ENCODE measurements at regions of chr13 and their contacts with region 1.

Region 1: GRCh38 chr13:27826379-27827353 is 34.4 kb downstream of the GSX1 start:
- DNase-seq: peak; percentile 70
- H3K4me3 Mint-ChIP-seq: no peak overlapping the region
- H3K27ac Mint-ChIP-seq: no peak overlapping the region
- H3K4me1 Mint-ChIP-seq: peaks cover 11% of the 10 kb centered on the region
- H3K27me3 Mint-ChIP-seq: peaks cover 65% of the 10 kb centered on the region

Region 2: DNA sequence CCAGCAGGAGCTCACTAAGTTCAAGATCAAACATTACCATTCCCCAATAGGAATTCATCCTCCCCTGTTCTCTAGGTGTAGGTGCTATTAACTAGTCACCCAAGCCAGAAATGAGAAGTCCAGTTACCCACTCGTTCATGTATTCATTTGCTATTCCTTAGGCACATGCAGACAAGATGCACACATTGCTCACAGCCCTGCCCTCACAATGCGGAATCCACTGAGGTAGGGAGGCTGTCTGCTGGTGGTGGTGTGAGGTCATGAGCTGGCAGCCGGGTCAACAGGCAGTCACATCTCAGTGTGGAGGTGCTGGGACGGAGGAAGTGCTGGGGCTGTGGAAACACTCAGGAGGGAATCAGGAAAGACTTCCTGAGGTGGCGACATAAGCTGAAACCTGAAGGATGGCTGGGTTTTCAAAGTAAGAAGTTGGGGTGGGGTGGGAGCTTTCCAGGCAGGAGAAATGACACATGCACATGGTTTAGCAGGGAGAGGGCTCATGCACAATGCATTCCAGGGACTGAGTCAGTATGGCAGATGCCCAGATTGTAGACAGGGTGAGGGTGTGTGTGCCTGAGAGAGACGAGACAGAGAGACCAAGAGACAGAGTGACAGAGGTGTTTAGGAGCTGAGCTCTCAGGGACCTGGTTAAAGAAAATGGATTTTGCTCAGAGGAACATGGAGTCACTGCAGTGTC is 772.6 kb before region 1 on chr13:
- CTCF ChIA-PET with region 1: no interaction called
- POLR2A ChIA-PET with region 1: no interaction called
- DNase-seq: no peak
- H3K4me3 Mint-ChIP-seq: no peak overlapping the region
- H3K27ac Mint-ChIP-seq: no peak overlapping the region
- H3K4me1 Mint-ChIP-seq: peaks cover 11% of the 10 kb centered on the region
- H3K27me3 Mint-ChIP-seq: no peaks in the 10 kb centered on the region

Region 3: DNA sequence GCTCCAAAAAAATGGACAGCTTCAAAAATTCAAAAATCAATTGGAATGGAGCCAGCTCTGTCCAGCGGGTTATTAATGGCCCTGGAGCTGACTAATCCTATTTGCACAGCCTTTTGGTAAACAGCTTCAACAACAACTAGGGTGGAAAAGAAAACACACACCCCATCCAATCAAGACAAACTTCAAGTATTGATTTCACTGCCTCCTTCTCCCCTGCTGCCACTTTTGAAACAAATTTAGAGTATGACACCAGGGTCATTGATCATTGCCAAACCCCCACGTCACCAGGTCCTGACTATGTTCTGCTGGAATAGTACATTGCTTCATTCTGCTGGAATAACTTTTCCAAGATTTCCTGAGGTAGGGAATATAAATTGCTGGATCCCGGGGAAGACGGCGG is 459.1 kb before region 1 on chr13:
- CTCF ChIA-PET with region 1: interaction called, 132 read pairs
- POLR2A ChIA-PET with region 1: no interaction called
- DNase-seq: no peak
- H3K4me3 Mint-ChIP-seq: no peak overlapping the region
- H3K27ac Mint-ChIP-seq: no peak overlapping the region
- H3K4me1 Mint-ChIP-seq: peaks cover 7% of the 10 kb centered on the region
- H3K27me3 Mint-ChIP-seq: peaks cover 35% of the 10 kb centered on the region

Region 4: GRCh38 chr13:27406178-27406939 is 420.3 kb before region 1 on chr13:
- CTCF ChIA-PET with region 1: interaction called, 19 read pairs
- POLR2A ChIA-PET with region 1: no interaction called
- DNase-seq: peak; percentile 38
- H3K4me3 Mint-ChIP-seq: no peak overlapping the region
- H3K27ac Mint-ChIP-seq: no peak overlapping the region
- H3K4me1 Mint-ChIP-seq: peaks cover 5% of the 10 kb centered on the region
- H3K27me3 Mint-ChIP-seq: peaks cover 29% of the 10 kb centered on the region

Region 5: GRCh38 chr13:27489456-27489855 is 337.2 kb before region 1 on chr13:
- CTCF ChIA-PET with region 1: no interaction called
- POLR2A ChIA-PET with region 1: no interaction called
- DNase-seq: no peak
- H3K4me3 Mint-ChIP-seq: no peak overlapping the region
- H3K27ac Mint-ChIP-seq: no peak overlapping the region
- H3K4me1 Mint-ChIP-seq: no peaks in the 10 kb centered on the region
- H3K27me3 Mint-ChIP-seq: no peaks in the 10 kb centered on the region

Region 6: DNA sequence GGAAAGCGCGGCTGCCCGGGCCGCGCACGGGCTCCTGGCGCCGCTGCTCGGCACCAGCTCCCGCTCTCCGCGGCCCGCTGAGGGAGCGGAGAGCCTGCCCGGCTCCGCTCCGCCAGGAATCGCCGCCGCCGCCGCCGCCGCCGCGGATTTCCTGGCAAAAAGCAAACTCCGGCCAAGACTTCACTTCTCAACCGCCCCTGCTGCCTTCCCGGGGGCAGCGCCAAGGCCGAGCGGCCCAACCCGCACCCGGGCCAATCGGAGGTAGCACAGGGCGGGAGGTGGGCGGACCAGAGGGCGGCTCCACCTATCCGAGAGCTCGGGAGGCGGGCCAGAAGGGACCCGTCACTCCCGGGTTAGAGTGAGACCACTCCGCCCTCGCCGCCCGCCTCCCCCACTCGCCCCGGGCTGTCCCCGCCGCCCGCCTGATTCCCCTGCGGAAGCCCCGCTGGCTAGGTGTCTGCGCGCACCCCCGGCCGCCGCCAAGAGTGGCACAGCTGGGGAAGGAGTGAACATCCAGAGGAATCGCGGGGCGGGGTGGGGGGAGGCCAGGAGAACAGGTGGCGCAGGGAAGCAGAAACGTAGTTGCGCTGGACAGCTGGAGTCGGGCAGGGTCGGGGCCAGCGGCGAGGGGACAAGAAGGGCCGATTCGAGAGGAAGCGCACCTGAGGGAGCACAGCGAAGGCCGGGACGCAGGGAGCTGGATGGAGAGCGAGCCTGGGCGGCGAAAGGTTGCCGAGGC is 206.1 kb before region 1 on chr13 and contains the start of gene LNX2:
- CTCF ChIA-PET with region 1: interaction called, 15 read pairs
- POLR2A ChIA-PET with region 1: interaction called, 3 read pairs
- DNase-seq: peak; percentile 97
- H3K4me3 Mint-ChIP-seq: peak within 1 kb of the TSS; percentile 94
- H3K27ac Mint-ChIP-seq: peak within 1 kb of the TSS; percentile 94
- H3K4me1 Mint-ChIP-seq: peaks cover 52% of the 10 kb centered on the region
- H3K27me3 Mint-ChIP-seq: no peaks in the 10 kb centered on the region
- total RNA-seq, gene LNX2: 8.0 to 8.1 TPM

Region 7: GRCh38 chr13:27808851-27809550 is 17.7 kb before region 1 on chr13:
- CTCF ChIA-PET with region 1: interaction called, 20 read pairs
- POLR2A ChIA-PET with region 1: no interaction called
- DNase-seq: no peak
- H3K4me3 Mint-ChIP-seq: no peak overlapping the region
- H3K27ac Mint-ChIP-seq: no peak overlapping the region
- H3K4me1 Mint-ChIP-seq: no peaks in the 10 kb centered on the region
- H3K27me3 Mint-ChIP-seq: peaks cover 30% of the 10 kb centered on the region

Region 8: DNA sequence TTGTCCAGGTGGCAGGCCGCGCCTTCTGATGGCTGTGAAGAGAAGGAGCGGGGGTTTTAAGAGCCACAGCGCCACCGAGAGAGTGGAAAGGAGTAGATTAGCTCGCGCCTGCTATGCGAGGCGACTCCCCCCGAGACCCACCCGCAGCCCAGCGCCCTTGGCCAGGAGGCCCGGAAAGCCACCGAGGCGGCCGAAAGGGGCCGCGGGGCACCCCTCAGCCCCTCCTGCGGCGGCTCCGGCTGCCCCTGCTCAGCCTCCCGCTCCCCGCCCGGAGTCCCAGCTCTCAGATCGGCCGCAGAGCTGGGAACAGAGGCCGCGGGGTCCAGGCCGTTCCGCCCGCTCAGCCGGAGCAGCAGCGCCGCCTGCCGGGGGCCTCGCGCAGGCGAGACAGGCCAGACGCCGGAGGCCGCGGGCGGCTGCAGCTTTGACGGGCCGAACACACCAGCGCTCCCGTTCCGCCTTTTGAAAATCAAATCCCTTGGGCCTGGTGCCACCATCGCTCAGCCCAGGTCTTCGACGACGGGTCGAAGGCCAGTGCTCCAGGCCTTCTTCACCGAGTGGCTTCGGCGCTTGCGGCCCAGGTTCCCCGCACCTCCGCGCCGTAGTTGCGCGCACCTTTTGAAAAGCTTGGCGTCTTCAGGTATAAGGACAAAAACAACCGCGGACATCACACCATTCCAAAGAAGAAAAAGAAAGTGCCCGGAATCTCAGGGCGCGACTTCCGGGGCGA is 127.2 kb after region 1 on chr13:
- CTCF ChIA-PET with region 1: interaction called, 58 read pairs
- POLR2A ChIA-PET with region 1: no interaction called
- DNase-seq: peak; percentile 69
- H3K4me3 Mint-ChIP-seq: peak overlapping the region; percentile 61
- H3K27ac Mint-ChIP-seq: no peak overlapping the region
- H3K4me1 Mint-ChIP-seq: peaks cover 14% of the 10 kb centered on the region
- H3K27me3 Mint-ChIP-seq: peaks cover 58% of the 10 kb centered on the region

Region 9: GRCh38 chr13:28093881-28094280 is 267.2 kb after region 1 on chr13:
- CTCF ChIA-PET with region 1: no interaction called
- POLR2A ChIA-PET with region 1: no interaction called
- DNase-seq: no peak
- H3K4me3 Mint-ChIP-seq: no peak overlapping the region
- H3K27ac Mint-ChIP-seq: no peak overlapping the region
- H3K4me1 Mint-ChIP-seq: no peaks in the 10 kb centered on the region
- H3K27me3 Mint-ChIP-seq: peaks cover 42% of the 10 kb centered on the region